Caco-2 (cell line): ENCODE measurements at regions of chr17 and their contacts with region 1.

Region 1: GRCh38 chr17:18248300-18248731 is 10.2 kb downstream of the FLII start:
- DNase-seq: peak; percentile 78 to 81
- H3K4me3 ChIP-seq: no peak overlapping the region
- H3K4me3 Mint-ChIP-seq: no peak overlapping the region
- H3K27ac Mint-ChIP-seq: no peak overlapping the region
- H3K4me1 ChIP-seq: no peaks in the 10 kb centered on the region
- H3K4me1 Mint-ChIP-seq: no peaks in the 10 kb centered on the region
- H3K27me3 ChIP-seq: no peaks in the 10 kb centered on the region
- H3K27me3 Mint-ChIP-seq: no peaks in the 10 kb centered on the region
- CTCF ChIP-seq: peak; percentile 70 to 82

Region 2: GRCh38 chr17:18203308-18203707 is 45.0 kb before region 1 on chr17:
- CTCF ChIA-PET with region 1: no interaction called
- POLR2A ChIA-PET with region 1: interaction called, 11 read pairs
- intact Hi-C with region 1: no loop called
- DNase-seq: peak; percentile 78 to 83
- H3K4me3 ChIP-seq: no peak overlapping the region
- H3K4me3 Mint-ChIP-seq: peak overlapping the region; percentile 44
- H3K27ac Mint-ChIP-seq: peak overlapping the region; percentile 88
- H3K4me1 ChIP-seq: peaks cover 19% of the 10 kb centered on the region
- H3K4me1 Mint-ChIP-seq: peaks cover 12% of the 10 kb centered on the region
- H3K27me3 ChIP-seq: no peaks in the 10 kb centered on the region
- H3K27me3 Mint-ChIP-seq: no peaks in the 10 kb centered on the region
- CTCF ChIP-seq: no peak

Region 3: DNA sequence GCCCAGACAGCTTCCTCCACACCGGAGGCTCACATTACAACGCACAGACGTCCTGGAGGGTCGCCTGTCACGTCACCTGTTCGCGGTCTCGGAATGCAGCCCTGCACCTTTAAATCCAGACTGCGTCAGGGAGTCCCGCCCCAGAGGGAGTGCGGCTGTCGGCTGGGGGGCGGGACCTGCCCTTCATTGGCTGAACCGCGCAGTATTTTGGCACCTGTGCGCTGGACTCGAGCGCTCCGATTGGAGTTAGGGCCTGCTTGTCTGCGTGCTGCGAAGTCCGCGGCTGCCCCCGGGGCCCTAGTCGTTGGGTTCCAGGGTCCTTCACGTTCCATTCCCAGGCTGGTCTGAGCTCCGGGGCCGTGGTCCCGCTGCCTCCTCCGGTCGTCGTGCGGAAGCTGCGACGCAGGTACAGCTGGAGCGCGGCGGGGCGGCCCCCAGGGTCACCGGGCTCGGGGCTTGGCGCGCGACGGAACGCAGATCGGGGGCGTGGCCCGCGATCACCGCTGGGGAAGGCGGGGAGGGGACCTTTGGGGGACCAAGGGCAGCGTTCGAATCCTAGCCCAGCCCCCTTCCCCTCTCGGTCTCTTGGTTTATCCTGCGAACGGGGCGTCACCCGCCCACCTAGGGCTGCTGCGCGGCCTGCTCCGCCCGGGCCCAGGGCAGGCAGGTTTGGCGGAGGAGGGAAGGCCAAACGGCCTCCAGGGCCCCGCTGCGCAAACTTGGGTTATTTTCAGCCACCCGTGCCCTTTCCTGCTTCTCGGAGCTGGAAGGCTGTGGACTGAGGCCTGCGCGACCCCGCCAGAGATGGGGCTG is 12.2 kb after region 1 on chr17 and contains the start of gene MIEF2:
- CTCF ChIA-PET with region 1: no interaction called
- POLR2A ChIA-PET with region 1: no interaction called
- intact Hi-C with region 1: loop called (anchors 1 kb)
- DNase-seq: peak; percentile 97 to 98
- H3K4me3 ChIP-seq: peak within 1 kb of the TSS; percentile 87
- H3K4me3 Mint-ChIP-seq: peak within 1 kb of the TSS; percentile 80
- H3K27ac Mint-ChIP-seq: peak within 1 kb of the TSS; percentile 96
- H3K4me1 ChIP-seq: peaks cover 31% of the 10 kb centered on the region
- H3K4me1 Mint-ChIP-seq: peaks cover 4% of the 10 kb centered on the region
- H3K27me3 ChIP-seq: no peaks in the 10 kb centered on the region
- H3K27me3 Mint-ChIP-seq: no peaks in the 10 kb centered on the region
- CTCF ChIP-seq: no peak
- total RNA-seq, gene MIEF2: 22.3 and 22.8 TPM in 2 replicates

Region 4: DNA sequence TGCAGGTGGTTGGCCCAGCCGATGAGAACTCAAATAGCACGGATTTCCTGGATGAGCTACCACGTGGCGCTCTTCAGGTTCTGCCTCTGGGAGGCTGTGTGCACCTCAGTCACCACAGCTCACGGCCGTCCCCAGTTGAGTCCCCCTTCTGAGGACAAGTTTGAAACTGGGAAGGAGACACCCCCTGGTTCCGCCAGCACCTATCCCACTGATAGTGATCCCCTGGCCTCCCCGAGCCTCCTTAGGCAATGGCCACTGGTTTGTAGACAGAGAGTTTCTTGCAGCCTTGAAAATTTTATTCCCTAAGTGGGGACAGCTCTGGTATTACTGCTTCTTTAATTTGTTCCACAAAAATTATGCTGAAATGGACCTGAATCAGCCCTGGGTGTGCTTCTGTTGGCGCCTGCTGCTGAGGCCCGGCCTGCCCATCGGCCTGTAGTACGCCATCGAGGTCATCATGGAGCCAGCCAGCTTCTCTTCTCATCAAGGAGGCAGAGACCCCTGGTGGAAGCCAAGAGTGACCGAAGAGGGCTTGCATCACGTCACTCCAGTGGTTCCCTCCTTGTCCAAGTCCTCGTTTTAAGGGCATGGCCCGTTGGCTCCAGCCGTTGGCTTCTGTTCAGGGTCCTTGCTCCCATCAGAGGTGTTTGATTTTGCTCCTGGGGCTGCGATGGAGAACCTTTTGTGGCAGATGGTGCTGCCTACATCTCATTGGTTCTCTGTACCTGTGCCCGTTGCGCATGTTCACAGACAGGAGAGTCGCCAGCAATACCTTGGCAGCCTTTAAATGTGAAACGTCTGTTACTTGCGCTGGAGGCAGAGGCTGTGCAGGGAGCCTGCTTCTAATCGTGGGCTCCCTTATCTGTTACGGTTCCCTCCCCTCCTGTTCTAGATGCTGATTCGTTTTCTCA is 76.1 kb after region 1 on chr17:
- CTCF ChIA-PET with region 1: no interaction called
- POLR2A ChIA-PET with region 1: no interaction called
- intact Hi-C with region 1: loop called (anchors 2 kb)
- DNase-seq: no peak
- H3K4me3 ChIP-seq: no peak overlapping the region
- H3K4me3 Mint-ChIP-seq: no peak overlapping the region
- H3K27ac Mint-ChIP-seq: no peak overlapping the region
- H3K4me1 ChIP-seq: no peaks in the 10 kb centered on the region
- H3K4me1 Mint-ChIP-seq: no peaks in the 10 kb centered on the region
- H3K27me3 ChIP-seq: no peaks in the 10 kb centered on the region
- H3K27me3 Mint-ChIP-seq: no peaks in the 10 kb centered on the region
- CTCF ChIP-seq: peak in 1 of 2 experiments; percentile 22